Spleen (tissue), 13 donors: ENCODE measurements at regions of chr13 and their contacts with region 1.

Region 1: GRCh38 chr13:99916366-99917103 is 55.0 kb downstream of the ZIC5 start:
- DNase-seq: no peak
- H3K4me3 ChIP-seq: no peak overlapping the region
- H3K27ac ChIP-seq: no peak overlapping the region
- H3K4me1 ChIP-seq: no peaks in the 10 kb centered on the region
- H3K27me3 ChIP-seq: peaks cover 0 to 41% (median 3%) of the 10 kb centered on the region in 7 donors
- CTCF ChIP-seq: peak; percentile 66 to 95 (median 81)
- POLR2A ChIP-seq: no peak

Region 2: GRCh38 chr13:99656092-99656745 is 260.3 kb before region 1 on chr13:
- intact Hi-C with region 1: loop called (anchors 5 kb)
- DNase-seq: peak; percentile 83
- H3K4me3 ChIP-seq: no peak overlapping the region
- H3K27ac ChIP-seq: peak overlapping the region in 1 of 8 donors; percentile 14
- H3K4me1 ChIP-seq: peaks cover 5 to 45% (median 30%) of the 10 kb centered on the region in 6 donors
- H3K27me3 ChIP-seq: peaks cover 0 to 14% (median 0%) of the 10 kb centered on the region in 7 donors
- CTCF ChIP-seq: peak; percentile 69 to 93 (median 87)
- POLR2A ChIP-seq: no peak

Region 3: GRCh38 chr13:100514788-100515409 is 598.4 kb after region 1 on chr13:
- intact Hi-C with region 1: loop called (anchors 5 kb)
- DNase-seq: peak; percentile 91
- H3K4me3 ChIP-seq: no peak overlapping the region
- H3K27ac ChIP-seq: no peak overlapping the region
- H3K4me1 ChIP-seq: peaks cover 0 to 25% (median 13%) of the 10 kb centered on the region in 6 donors
- H3K27me3 ChIP-seq: no peaks in the 10 kb centered on the region
- CTCF ChIP-seq: peak; percentile 70 to 95 (median 87)
- POLR2A ChIP-seq: no peak